Heart left ventricle (tissue), 16 donors: ENCODE measurements at regions of chr15 and their contacts with region 1.

Region 1: GRCh38 chr15:89206908-89207331 is 14.5 kb downstream of the RLBP1 start:
- DNase-seq: peak; percentile 59 to 85 (median 69)
- ATAC-seq: peak; percentile 65 to 85 (median 76)
- H3K4me3 ChIP-seq: peak overlapping the region in 5 of 12 donors; percentile 1 to 46 (median 25)
- H3K27ac ChIP-seq: no peak overlapping the region
- H3K4me1 ChIP-seq: peaks cover 0 to 9% (median 5%) of the 10 kb centered on the region in 12 donors
- H3K27me3 ChIP-seq: no peaks in the 10 kb centered on the region
- CTCF ChIP-seq: peak; percentile 94 to 99 (median 97)
- POLR2A ChIP-seq: no peak

Region 2: DNA sequence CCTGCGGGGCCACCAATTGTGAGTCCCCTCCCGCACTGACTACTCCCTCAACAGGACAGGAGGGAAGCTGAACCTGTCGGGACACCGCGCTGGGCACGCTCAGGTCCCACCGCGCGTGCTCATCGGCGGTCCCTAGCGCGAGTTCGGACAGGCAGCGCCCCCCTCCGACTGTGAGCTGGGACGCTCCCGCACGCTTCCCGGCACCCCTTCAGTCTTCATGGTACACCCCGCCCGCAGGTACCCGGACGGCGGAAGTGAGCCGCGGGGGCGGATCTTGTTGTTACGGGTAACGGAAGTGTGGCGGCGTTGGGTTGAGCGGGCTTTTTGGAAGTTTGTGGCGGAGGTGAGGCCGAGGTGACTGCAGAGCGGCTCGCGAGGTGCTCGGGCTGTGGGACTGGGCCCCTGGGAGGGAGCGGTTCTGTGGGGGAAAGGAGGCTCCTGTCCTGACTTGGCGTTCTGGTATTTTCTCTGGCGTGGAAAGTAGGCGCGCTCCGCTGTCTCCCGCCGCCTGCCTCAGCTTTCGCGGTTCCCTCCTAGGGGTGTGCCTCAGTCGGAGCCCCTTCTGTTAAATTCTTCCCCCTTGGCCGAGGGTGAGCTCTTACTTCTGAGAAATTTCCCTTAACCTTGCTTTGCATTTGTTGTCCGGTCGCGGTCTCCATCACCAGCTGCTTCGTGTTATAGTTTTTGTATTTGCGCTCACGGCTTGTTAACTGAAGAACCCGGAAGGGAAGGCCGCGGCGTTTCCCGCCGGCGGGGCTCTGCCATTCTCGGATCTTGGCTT is 37.0 kb after region 1 on chr15 and contains the start of gene FANCI:
- intact Hi-C with region 1: loop called in 3 of 10 experiments (anchors 2 to 5 kb)
- DNase-seq: peak; percentile 94 to 98 (median 96)
- ATAC-seq: peak; percentile 99 to 100 (median 100)
- H3K4me3 ChIP-seq: peak within 1 kb of the TSS; percentile 44 to 87 (median 66)
- H3K27ac ChIP-seq: peak within 1 kb of the TSS in 10 of 12 donors; percentile 8 to 67 (median 37)
- H3K4me1 ChIP-seq: peaks cover 3 to 17% (median 12%) of the 10 kb centered on the region in 12 donors
- H3K27me3 ChIP-seq: no peaks in the 10 kb centered on the region
- CTCF ChIP-seq: peak; percentile 17 to 73 (median 52)
- POLR2A ChIP-seq: peak in 1 of 2 donors; percentile 45
- total RNA-seq, gene FANCI: 1.0 to 10.3 (median 1.9) TPM

Region 3: DNA sequence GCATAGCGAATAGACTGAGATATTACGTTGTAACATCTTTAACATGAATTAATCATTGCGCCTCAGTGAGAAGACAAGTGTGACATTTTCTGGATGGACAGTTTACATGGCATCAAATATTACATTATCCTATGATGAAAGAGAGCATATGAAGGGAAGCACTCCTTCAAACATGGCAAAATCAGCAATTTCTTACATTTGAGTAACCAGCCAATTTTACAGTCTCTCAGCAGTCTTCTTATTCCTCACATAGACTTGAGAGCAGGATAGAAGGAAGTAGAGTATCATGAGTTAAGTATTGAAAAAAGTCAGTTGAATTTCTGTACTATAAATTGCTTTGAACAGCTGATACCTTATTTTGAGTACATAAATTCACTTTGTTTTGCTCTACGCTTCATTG is 75.7 kb after region 1 on chr15:
- intact Hi-C with region 1: loop called in 1 of 10 experiments (anchors 10 kb)
- DNase-seq: no peak
- ATAC-seq: no peak
- H3K4me3 ChIP-seq: no peak overlapping the region
- H3K27ac ChIP-seq: no peak overlapping the region
- H3K4me1 ChIP-seq: no peaks in the 10 kb centered on the region
- H3K27me3 ChIP-seq: no peaks in the 10 kb centered on the region
- CTCF ChIP-seq: no peak
- POLR2A ChIP-seq: no peak

Region 4: GRCh38 chr15:89293012-89293411 is 86.1 kb after region 1 on chr15:
- intact Hi-C with region 1: loop called in 4 of 10 experiments (anchors 5 to 10 kb)
- DNase-seq: no peak
- ATAC-seq: no peak
- H3K4me3 ChIP-seq: no peak overlapping the region
- H3K27ac ChIP-seq: no peak overlapping the region
- H3K4me1 ChIP-seq: no peaks in the 10 kb centered on the region
- H3K27me3 ChIP-seq: no peaks in the 10 kb centered on the region
- CTCF ChIP-seq: no peak
- POLR2A ChIP-seq: no peak

Region 5: GRCh38 chr15:89299896-89300295 is 93.0 kb after region 1 on chr15:
- intact Hi-C with region 1: loop called in 6 of 10 experiments (anchors 2 to 10 kb)
- DNase-seq: no peak
- ATAC-seq: peak in 3 of 4 donors; percentile 41 to 51 (median 42)
- H3K4me3 ChIP-seq: no peak overlapping the region
- H3K27ac ChIP-seq: no peak overlapping the region
- H3K4me1 ChIP-seq: no peaks in the 10 kb centered on the region
- H3K27me3 ChIP-seq: no peaks in the 10 kb centered on the region
- CTCF ChIP-seq: peak in 9 of 12 donors; percentile 14 to 51 (median 35)
- POLR2A ChIP-seq: no peak

Region 6: DNA sequence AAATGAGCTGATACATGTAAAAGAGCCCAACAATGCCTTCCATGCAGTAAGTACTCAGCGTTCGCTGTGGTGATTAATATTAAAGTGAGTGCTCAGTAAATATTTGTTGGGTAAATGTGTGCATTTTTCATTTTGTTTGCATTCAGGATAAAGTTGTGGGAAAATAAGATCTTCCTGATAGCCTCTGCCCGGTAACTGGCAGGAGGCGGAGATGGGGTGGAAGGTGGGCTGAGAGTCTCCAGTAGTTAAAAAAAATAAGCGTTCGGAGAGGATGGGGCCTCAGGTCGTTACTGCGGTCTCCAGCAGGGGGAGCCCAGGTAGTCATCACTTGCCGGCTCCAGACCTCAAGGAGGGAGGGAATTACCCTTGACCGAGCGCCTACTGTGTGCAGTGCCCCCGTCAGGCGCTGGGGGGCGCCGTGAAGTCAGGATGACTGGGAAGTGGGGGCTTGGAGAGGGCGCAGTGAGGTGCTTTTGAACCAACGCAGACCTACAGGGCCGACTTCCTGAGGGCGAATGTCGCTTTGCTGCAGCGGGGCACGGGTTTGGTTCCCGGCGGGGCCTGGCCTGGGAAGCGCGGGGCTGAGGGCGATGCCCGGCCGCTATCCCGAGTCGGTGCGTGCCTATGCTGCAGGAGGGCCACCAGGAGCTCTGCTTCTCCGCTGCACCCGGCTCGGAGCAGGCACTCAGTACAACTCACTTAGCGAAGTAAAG is 209.4 kb after region 1 on chr15:
- intact Hi-C with region 1: loop called in 1 of 10 experiments (anchors 5 kb)
- DNase-seq: peak in 3 of 5 donors; percentile 30
- ATAC-seq: peak; percentile 25 to 57 (median 42)
- H3K4me3 ChIP-seq: no peak overlapping the region
- H3K27ac ChIP-seq: no peak overlapping the region
- H3K4me1 ChIP-seq: peaks cover 0 to 5% (median 0%) of the 10 kb centered on the region in 12 donors
- H3K27me3 ChIP-seq: peaks cover 38 to 100% (median 81%) of the 10 kb centered on the region in 9 donors
- CTCF ChIP-seq: peak; percentile 44 to 74 (median 64)
- POLR2A ChIP-seq: no peak

Region 7: DNA sequence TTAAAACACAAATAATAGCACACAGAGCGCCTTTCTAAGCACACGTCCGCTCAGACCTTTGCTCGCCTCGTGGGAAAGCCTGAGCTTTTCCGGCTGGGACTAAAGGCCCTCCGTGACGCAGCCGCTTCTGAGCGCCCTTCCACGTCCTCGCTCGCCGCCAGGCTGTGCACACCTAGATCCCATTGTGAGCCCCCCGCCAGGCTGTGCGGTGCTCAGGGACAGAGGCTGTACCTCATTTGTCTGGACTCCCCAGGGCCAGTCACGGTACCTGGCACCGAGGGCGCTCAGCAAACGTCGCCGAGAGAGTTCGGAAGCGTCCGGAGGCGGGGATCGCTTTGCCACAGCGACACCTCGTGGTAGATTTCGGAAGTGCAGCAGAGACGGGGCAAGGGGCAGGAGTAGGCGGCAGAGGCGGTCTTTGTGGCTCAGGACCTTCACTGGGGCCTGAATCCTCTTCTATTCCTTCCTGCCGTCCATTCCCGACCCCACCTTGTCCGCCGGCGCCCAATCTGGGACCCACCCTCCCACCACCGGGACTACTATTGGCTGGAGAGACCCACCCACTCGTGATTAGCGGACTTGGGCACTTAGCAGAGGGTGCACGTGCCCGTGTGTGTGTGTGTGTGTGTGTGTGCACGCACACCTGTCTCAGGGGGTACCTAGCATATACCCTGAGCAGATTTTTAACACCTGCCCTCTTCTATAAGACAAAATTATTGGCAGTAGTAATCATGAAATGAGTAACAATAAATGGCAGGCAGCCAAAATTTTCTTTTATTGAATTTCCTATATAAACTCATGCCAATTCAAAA is 223.8 kb after region 1 on chr15:
- intact Hi-C with region 1: loop called in 1 of 10 experiments (anchors 5 kb)
- DNase-seq: peak; percentile 77 to 91 (median 82)
- ATAC-seq: peak; percentile 90 to 97 (median 92)
- H3K4me3 ChIP-seq: peak overlapping the region; percentile 24 to 62 (median 47)
- H3K27ac ChIP-seq: no peak overlapping the region
- H3K4me1 ChIP-seq: peaks cover 0 to 14% (median 5%) of the 10 kb centered on the region in 12 donors
- H3K27me3 ChIP-seq: peaks cover 0 to 15% (median 3%) of the 10 kb centered on the region in 9 donors
- CTCF ChIP-seq: peak; percentile 96 to 99 (median 97)
- POLR2A ChIP-seq: no peak